ENCODE measurements at regions of chr6 and their contacts with region 1.

Region 1: GRCh38 chr6:136683209-136683941 is 108.9 kb downstream of the MAP3K5 start:
- DNase-seq: no peak
- ATAC-seq: no peak
- H3K4me3 Mint-ChIP-seq: no peak overlapping the region
- H3K27ac Mint-ChIP-seq: no peak overlapping the region
- H3K4me1 Mint-ChIP-seq: no peaks in the 10 kb centered on the region
- H3K27me3 Mint-ChIP-seq: no peaks in the 10 kb centered on the region
- CTCF ChIP-seq: no peak

Region 2: DNA sequence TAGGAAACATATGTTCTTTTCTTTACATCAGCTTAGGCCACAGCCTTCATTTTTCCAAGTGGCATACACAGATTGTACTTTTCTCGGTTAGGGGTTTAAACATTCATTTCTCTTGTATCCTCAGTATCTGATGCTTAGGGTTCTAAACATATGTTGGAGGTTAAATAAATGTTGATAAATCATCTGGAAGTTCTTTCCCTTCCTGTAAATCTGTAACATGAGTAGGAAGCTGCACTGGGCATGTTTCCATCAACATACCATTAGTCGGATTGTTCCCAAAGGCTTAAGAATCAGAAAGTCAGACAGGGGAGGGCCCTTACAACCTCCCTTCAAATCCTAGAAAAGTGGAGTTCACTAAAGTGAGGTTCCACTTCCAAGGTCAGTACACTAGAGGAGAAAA is 339.0 kb before region 1 on chr6:
- CTCF ChIA-PET with region 1: no interaction called
- POLR2A ChIA-PET with region 1: no interaction called
- intact Hi-C with region 1: no loop called
- DNase-seq: no peak
- ATAC-seq: no peak
- H3K4me3 Mint-ChIP-seq: no peak overlapping the region
- H3K27ac Mint-ChIP-seq: no peak overlapping the region
- H3K4me1 Mint-ChIP-seq: no peaks in the 10 kb centered on the region
- H3K27me3 Mint-ChIP-seq: peaks cover 4% of the 10 kb centered on the region
- CTCF ChIP-seq: no peak

Region 3: DNA sequence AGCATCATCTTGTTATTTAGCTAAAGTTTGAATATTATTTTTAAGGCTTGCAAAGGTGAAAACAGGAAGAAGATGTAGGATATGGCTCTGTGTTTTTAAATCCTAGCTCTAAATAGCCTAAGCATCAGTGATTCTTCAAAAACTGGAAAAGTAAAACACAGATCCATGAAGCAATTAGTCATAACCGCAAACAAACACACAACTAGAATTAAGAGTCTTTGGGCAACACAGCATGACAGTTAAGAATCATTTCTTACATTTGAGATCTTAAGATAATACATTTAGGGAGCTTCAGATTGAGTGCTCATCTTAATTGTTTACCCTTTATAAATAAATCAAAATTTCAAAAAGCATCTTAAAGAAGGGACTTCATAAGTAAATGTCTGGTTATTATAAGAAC is 17.3 kb before region 1 on chr6:
- CTCF ChIA-PET with region 1: no interaction called
- POLR2A ChIA-PET with region 1: no interaction called
- intact Hi-C with region 1: loop called (anchors 2 kb)
- DNase-seq: no peak
- ATAC-seq: no peak
- H3K4me3 Mint-ChIP-seq: no peak overlapping the region
- H3K27ac Mint-ChIP-seq: no peak overlapping the region
- H3K4me1 Mint-ChIP-seq: no peaks in the 10 kb centered on the region
- H3K27me3 Mint-ChIP-seq: no peaks in the 10 kb centered on the region
- CTCF ChIP-seq: no peak